Endothelial cell of umbilical vein (primary cell): ENCODE measurements at regions of chr3 and their contacts with region 1.

Region 1: GRCh38 chr3:153785902-153786301 is 335.3 kb upstream of the ARHGEF26 start:
- DNase-seq: no peak
- H3K4me3 ChIP-seq: no peak overlapping the region
- H3K27ac ChIP-seq: no peak overlapping the region
- H3K4me1 ChIP-seq: no peaks in the 10 kb centered on the region
- H3K27me3 ChIP-seq: no peaks in the 10 kb centered on the region
- CTCF ChIP-seq: no peak
- POLR2A ChIP-seq: no peak

Region 2: DNA sequence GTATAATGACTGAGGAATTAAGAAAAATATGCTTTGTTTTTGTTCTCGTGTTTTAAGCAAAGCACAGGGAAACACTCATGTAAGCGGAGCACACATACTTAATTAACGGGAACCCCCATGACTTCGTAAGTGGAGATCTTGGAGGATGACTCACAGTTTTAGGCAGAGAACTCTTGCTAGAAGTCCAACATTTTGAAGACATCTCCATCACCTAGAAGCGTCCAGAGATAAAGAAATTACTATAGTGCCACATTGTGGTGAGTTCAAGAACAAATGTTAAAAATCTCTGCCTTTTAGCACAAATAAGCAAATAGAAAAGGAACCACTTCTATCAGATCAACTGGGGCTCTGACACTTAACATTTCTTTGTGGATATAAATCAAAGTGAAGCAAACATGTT is 141.2 kb after region 1 on chr3:
- CTCF ChIA-PET with region 1: interaction called, 5 read pairs
- POLR2A ChIA-PET with region 1: no interaction called
- dilution Hi-C with region 1: no loop called
- intact Hi-C with region 1: loop called (anchors 2 kb)
- DNase-seq: peak; percentile 50
- H3K4me3 ChIP-seq: no peak overlapping the region
- H3K27ac ChIP-seq: no peak overlapping the region
- H3K4me1 ChIP-seq: no peaks in the 10 kb centered on the region
- H3K27me3 ChIP-seq: no peaks in the 10 kb centered on the region
- CTCF ChIP-seq: no peak
- POLR2A ChIP-seq: no peak